ENCODE measurements at regions of chr4 and their contacts with region 1.

Region 1: GRCh38 chr4:160403081-160403480 is 1300.2 kb downstream of the RAPGEF2 start:
- DNase-seq: no peak
- H3K4me3 ChIP-seq: no peak overlapping the region
- CTCF ChIP-seq: no peak
- POLR2A ChIP-seq: no peak

Region 2: GRCh38 chr4:160481696-160482330 is 78.7 kb after region 1 on chr4:
- intact Hi-C with region 1: loop called (anchors 2 kb)
- DNase-seq: no peak
- H3K4me3 ChIP-seq: no peak overlapping the region
- CTCF ChIP-seq: no peak
- POLR2A ChIP-seq: no peak

Region 3: GRCh38 chr4:162356181-162356580 is 1953.1 kb after region 1 on chr4:
- intact Hi-C with region 1: no loop called
- DNase-seq: no peak
- H3K4me3 ChIP-seq: no peak overlapping the region
- CTCF ChIP-seq: no peak
- POLR2A ChIP-seq: no peak